ENCODE measurements at regions of chr1 and their contacts with region 1.

Region 1: DNA sequence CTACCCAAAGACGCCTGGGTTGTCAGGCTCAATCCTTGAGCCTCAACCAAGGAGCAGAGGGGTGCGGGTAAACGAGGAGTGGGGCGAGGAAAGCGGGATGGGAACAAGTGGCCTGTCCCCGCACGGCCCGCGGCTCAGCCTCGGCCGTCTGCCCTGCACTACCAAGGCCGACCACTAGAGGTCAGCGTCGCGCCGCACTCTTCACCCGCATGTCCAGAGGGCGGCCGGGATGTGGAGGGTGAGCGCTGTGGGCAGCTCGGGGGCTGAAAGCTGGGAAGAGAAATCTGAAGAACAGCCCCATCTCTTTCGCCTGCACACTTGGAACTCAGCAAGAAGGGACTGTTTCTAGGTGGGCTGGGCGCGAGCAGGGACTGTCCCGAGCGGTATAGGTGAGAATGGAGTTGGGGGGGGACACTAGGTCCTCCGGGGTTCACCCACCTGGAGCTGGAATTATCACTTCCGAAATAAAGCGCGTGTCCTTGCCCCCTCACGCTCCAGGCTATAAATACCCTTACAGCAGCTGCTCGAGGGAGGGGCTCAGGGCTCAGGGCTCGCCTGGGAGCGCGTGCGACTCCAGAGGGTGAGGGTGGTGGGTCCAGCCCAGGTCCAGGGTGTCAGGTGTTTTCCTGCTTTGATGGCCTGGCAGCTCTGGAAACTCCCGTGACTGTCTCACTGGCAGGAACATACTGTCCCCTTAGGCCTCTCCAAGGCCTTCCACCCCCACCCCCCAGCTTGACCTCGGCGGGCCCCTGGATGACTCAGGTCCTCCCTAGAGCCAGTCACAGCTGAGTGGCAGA is 9.8 kb downstream of the SLC30A2 start:
- DNase-seq: peak in 9 of 10 donors; percentile 74 to 89 (median 84)
- H3K4me3 ChIP-seq: peak overlapping the region; percentile 66 to 96 (median 83)
- H3K27ac ChIP-seq: peak overlapping the region in 51 of 59 donors; percentile 16 to 90 (median 77)
- H3K27me3 ChIP-seq: no peaks in the 10 kb centered on the region
- CTCF ChIP-seq: peak; percentile 92 to 100 (median 99)

Region 2: DNA sequence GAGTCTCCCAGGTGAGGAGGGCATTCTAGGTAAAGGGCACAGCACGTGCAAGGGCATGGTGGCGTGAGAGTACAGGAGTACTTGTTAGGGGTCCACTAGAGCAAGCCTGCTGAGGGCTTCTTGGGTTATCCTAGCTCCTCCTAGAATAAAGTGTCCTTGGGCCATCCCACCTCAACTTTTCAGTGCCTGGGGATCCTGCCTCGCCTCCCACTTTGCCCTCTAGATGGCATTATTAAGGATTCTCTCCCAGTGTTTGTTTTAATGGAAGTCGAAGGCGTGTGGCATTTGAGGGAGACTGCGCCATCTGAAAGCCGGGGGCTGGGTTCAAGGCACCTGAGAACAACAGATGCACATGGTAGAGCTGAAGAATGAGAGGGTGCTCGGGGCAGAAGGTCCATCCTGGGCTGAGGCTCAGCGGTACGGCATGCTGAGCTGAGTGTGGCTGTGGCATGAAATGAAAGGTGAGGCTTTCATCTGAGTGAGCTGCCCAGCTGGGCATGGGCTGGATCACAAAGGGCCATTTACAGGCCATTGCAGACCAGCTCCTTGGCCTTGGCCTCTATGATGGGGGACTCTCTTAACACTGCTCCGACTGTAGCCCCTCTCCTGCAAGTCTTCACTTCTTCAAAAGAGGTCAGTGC is 310.5 kb before region 1 on chr1:
- intact Hi-C with region 1: no loop called
- DNase-seq: peak in 1 of 10 donors; percentile 20
- H3K4me3 ChIP-seq: no peak overlapping the region
- H3K27ac ChIP-seq: peak overlapping the region in 2 of 59 donors; percentile 3 to 7
- H3K27me3 ChIP-seq: no peaks in the 10 kb centered on the region
- CTCF ChIP-seq: no peak

Region 3: GRCh38 chr1:25810341-25811299 is 225.5 kb before region 1 on chr1:
- intact Hi-C with region 1: no loop called
- DNase-seq: peak in 8 of 10 donors; percentile 73 to 89 (median 78)
- H3K4me3 ChIP-seq: peak overlapping the region in 1 of 59 donors; percentile 8
- H3K27ac ChIP-seq: peak overlapping the region in 43 of 59 donors; percentile 1 to 92 (median 57)
- H3K27me3 ChIP-seq: no peaks in the 10 kb centered on the region
- CTCF ChIP-seq: peak; percentile 76 to 96 (median 92)

Region 4: DNA sequence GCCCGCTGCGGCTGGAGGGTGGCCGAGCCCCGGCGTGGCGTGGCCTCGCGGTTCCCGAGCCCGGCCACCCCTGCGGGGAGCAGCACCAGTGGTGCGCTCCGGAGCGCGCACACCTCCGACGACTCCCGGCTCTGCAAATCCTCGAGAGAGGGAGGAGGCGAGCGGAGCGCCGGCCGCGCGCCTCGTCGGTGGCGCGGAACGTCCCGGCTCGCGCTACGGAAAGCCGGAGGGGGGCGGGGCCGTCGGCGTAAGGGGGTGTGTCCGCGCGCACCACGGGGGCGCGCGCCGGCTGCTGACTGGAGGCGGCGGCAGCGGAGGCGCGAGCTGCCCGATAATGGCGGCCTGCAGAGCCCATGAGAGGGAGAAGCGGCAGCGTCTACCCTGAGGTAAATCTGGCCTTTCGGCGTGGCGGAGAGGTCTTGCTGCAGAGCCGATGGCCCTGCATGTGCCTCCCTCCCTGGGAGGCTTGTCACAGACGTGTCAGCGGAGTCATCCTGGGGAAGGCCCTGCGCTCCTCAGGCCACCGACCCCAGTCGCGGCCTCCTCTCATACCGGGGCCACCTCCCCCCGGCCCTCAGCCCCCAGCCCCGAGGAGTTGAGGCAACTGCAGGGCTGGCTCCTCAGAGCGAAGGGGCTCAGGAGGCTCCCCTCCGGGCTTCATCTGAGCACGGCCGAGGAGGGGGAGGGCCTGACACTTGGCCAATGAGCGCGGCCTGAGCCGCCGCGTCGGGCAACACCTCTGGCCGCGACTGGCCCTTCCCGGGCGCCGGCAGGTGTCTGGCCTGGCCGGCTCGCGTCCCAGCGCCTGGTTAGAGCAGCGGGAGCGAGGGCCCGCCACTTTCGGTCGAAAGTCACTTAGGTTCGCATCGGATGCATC is 75.6 kb after region 1 on chr1 and contains the start of gene PDIK1L:
- intact Hi-C with region 1: loop called in 1 of 2 experiments (anchors 5 kb)
- DNase-seq: peak; percentile 78 to 94 (median 88)
- H3K4me3 ChIP-seq: peak within 1 kb of the TSS; percentile 68 to 100 (median 98)
- H3K27ac ChIP-seq: peak within 1 kb of the TSS; percentile 89 to 99 (median 97)
- H3K27me3 ChIP-seq: no peaks in the 10 kb centered on the region
- CTCF ChIP-seq: peak in 20 of 56 donors; percentile 8 to 51 (median 30)
- total RNA-seq, gene PDIK1L: 6.9 to 24.8 (median 16.2) TPM

Region 5: GRCh38 chr1:26161415-26162219 is 125.5 kb after region 1 on chr1:
- intact Hi-C with region 1: loop called (anchors 5 kb)
- DNase-seq: peak in 7 of 10 donors; percentile 23 to 79 (median 60)
- H3K4me3 ChIP-seq: peak overlapping the region; percentile 43 to 88 (median 69)
- H3K27ac ChIP-seq: peak overlapping the region in 38 of 59 donors; percentile 2 to 80 (median 54)
- H3K27me3 ChIP-seq: peaks cover 0 to 7% (median 0%) of the 10 kb centered on the region in 45 donors
- CTCF ChIP-seq: peak in 29 of 56 donors; percentile 7 to 65 (median 34)

Region 6: DNA sequence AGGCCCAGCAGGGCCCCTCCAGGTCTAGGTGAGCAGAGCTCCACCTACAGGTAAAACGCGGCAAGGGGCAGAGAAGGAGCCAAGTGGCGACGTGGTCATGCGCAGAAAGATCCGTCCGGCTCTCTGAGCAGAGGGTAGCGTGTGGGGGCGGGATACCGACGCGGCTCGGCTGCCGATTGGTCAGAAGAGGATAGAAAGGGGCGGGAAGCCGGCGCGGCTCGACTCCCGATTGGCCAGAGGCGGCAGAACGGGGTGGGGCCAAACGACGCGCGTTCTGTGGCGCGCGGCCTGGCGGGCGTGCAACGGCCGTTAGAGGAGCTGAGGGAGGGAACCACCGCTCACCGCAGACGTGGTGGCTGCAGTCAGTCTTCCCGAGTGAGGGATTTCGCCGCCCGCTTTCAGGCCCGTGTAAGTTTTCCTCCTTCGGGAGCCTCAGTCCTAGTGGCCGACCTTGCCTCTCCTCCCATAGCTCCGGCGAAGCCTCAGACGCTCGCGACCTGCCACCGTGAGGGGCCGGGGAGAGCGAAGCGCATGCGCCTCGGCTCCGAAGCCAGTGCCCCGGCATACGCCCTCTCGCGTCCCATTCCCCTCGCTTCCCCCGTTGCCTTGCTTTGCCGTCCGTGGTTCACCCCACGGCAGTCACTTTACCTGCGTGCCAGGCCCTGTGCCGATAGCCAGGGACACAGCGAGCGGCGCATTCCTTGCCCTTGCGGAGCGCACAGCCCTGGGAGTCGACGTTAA is 197.9 kb after region 1 on chr1 and contains the start of gene CEP85:
- intact Hi-C with region 1: loop called in 1 of 2 experiments (anchors 5 kb)
- DNase-seq: peak; percentile 97 to 100 (median 99)
- H3K4me3 ChIP-seq: peak within 1 kb of the TSS; percentile 60 to 100 (median 88)
- H3K27ac ChIP-seq: peak within 1 kb of the TSS; percentile 46 to 99 (median 89)
- H3K27me3 ChIP-seq: no peaks in the 10 kb centered on the region
- CTCF ChIP-seq: peak; percentile 48 to 93 (median 84)
- total RNA-seq, gene CEP85: 11.3 to 55.4 (median 22.9) TPM